CD8-positive, alpha-beta T cell (primary cell): ENCODE measurements at regions of chr20 and their contacts with region 1.

Region 1: DNA sequence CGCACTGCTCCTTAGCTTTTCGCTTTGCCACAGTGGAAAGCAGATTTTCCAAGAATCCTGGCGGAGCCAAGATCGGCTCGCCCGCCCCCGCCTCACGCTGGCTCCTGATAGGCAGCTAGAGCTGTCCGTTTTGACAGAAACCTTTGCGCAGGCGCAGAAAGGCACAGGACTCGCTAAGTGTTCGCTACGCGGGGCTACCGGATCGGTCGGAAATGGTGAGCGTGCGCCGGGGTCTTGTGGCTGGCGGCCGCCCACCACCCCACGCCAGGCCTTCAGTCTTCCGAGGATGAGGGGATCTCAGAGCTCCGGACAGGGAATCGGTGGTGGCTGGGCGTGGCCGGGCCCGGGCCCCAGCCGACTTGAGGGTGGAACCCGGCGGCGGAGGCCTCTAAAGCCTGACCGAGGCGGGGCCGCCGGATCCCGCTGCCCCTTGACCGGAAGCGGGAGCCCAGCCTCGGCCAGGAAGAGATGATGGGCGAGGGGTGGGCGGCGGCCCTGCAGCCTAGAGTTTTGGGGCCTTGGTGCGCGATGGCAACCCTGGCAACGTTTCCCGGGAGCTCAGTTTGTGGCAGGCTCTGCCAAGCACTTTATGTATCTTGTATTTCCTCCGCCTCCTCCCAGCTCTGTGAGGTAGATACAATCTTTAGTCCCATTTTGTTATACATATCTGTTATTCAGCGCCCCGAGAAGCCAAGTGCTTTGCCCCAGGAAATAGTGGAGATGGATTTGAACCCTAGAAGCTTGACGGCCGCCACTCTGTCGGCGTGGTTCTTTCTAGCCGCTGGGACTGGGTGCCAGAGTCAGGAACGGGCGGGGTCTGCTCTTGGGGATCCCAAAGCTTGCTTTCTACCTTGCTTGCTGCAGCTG is at the start of gene DYNLRB1:
- DNase-seq: peak; percentile 84 to 97 (median 96)
- ATAC-seq: peak; percentile 74
- H3K4me3 ChIP-seq: peak within 1 kb of the TSS; percentile 85 to 100
- H3K4me3 Mint-ChIP-seq: peak within 1 kb of the TSS; percentile 100
- H3K27ac ChIP-seq: peak within 1 kb of the TSS; percentile 77 to 85
- H3K27ac Mint-ChIP-seq: peak within 1 kb of the TSS; percentile 98
- H3K4me1 ChIP-seq: peaks cover 24% of the 10 kb centered on the region
- H3K4me1 Mint-ChIP-seq: peaks cover 60% of the 10 kb centered on the region
- H3K27me3 ChIP-seq: no peaks in the 10 kb centered on the region
- H3K27me3 Mint-ChIP-seq: no peaks in the 10 kb centered on the region
- CTCF ChIP-seq: no peak
- total RNA-seq, gene DYNLRB1: 34.9 to 38.0 TPM

Region 2: DNA sequence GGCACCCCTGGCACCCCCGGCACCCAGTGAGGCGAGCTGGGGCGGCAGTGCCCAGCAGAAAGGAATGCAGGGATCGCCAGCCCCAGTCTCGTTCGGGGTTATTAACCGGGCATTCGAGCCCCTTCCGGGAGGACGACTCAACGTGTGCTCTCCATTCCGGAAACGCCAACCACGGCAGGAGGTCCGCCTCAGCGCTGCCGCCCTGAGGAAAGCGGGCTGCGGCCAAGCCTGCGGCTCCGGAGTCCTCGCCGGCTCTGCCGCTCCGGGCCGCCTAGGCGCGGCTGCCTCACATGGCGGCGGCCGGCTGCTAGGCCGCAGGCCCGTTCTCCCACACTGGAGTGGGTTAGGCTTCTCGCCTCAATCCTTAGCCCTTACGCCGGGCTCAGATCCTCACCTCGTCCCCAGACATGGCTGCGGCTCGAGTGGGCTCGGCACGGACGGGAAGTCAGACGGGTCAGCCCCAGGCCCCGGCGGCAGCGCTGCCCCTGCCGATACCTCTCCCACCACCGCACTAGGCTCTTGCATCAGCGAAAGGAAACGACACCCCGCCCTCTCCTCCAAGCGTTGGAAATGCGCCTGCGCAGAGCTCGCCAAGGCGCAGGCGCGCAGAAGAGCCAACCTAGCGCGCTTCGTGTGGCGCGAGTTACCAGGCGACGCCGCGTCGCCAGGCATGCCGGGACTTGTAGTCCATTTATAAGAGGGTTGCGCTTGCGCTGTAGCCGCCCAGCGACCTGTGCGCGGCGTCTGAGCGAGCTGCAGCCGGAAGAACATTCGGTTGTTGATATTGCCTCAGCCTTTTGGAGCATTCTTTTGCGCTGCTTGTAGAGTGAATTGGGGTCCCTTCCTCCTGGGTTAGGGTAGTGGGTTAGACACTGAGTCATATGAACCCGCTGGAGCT is 404.5 kb before region 1 on chr20 and contains the start of gene EIF2S2:
- CTCF ChIA-PET with region 1: no interaction called
- POLR2A ChIA-PET with region 1: interaction called, 5 read pairs
- intact Hi-C with region 1: loop called in 1 of 2 experiments (anchors 5 kb)
- DNase-seq: peak; percentile 91 to 99 (median 95)
- ATAC-seq: peak; percentile 89
- H3K4me3 ChIP-seq: peak within 1 kb of the TSS; percentile 81 to 86
- H3K4me3 Mint-ChIP-seq: peak within 1 kb of the TSS; percentile 96
- H3K27ac ChIP-seq: peak within 1 kb of the TSS; percentile 89 to 93
- H3K27ac Mint-ChIP-seq: peak within 1 kb of the TSS; percentile 98
- H3K4me1 ChIP-seq: peaks cover 34% of the 10 kb centered on the region
- H3K4me1 Mint-ChIP-seq: peaks cover 42% of the 10 kb centered on the region
- H3K27me3 ChIP-seq: no peaks in the 10 kb centered on the region
- H3K27me3 Mint-ChIP-seq: no peaks in the 10 kb centered on the region
- CTCF ChIP-seq: no peak
- total RNA-seq, gene EIF2S2: 19.4 to 19.6 TPM

Region 3: DNA sequence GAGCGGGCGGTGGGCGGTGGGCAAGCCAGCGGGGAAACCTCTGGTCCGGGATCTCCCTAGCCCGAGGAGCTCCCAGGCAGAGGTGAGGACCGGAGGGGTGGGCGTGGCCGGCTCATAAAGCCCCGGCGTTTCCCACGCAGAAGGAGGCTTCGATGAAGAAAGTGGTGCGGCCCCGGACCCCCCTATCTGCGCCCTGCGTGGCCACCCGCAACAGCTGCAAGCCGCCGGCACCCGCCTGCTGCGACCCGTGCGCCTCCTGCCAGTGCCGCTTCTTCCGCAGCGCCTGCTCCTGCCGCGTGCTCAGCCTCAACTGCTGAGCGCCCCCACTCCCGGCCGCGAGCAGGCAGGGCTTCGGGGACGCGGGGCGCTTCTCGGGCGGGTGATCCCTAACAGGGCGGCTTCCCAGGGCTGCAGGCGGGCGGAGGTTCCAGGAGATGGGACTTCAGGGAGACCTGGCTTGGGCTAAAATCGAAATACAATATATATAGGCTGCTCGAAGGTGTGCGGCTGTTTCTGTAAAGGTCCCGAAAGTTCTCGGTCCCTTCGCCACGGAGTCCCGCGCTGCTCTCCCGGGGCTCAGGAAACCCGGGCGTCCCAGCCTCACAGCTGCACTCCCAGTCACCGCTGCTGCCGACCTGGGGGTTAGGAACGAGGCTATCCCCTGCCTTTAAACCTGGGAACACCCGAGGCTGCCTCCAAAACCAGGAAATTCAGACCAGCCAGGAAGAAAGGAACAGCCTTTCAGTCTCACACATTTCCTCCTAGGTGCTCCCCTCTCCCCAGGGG is 247.4 kb before region 1 on chr20:
- CTCF ChIA-PET with region 1: no interaction called
- POLR2A ChIA-PET with region 1: no interaction called
- intact Hi-C with region 1: no loop called
- DNase-seq: peak in 8 of 9 experiments; percentile 7 to 61 (median 32)
- ATAC-seq: peak; percentile 61
- H3K4me3 ChIP-seq: peak overlapping the region; percentile 14 to 18
- H3K4me3 Mint-ChIP-seq: peak overlapping the region; percentile 49
- H3K27ac ChIP-seq: no peak overlapping the region
- H3K27ac Mint-ChIP-seq: no peak overlapping the region
- H3K4me1 ChIP-seq: peaks cover 4% of the 10 kb centered on the region
- H3K4me1 Mint-ChIP-seq: peaks cover 2% of the 10 kb centered on the region
- H3K27me3 ChIP-seq: no peaks in the 10 kb centered on the region
- H3K27me3 Mint-ChIP-seq: peaks cover 14% of the 10 kb centered on the region
- CTCF ChIP-seq: no peak

Region 4: GRCh38 chr20:34312544-34313217 is 203.8 kb before region 1 on chr20:
- CTCF ChIA-PET with region 1: interaction called, 37 read pairs
- POLR2A ChIA-PET with region 1: interaction called, 5 read pairs
- intact Hi-C with region 1: no loop called
- DNase-seq: peak; percentile 74 to 92 (median 86)
- ATAC-seq: peak; percentile 100
- H3K4me3 ChIP-seq: no peak overlapping the region
- H3K4me3 Mint-ChIP-seq: peak overlapping the region; percentile 39
- H3K27ac ChIP-seq: no peak overlapping the region
- H3K27ac Mint-ChIP-seq: no peak overlapping the region
- H3K4me1 ChIP-seq: peaks cover 9% of the 10 kb centered on the region
- H3K4me1 Mint-ChIP-seq: peaks cover 5% of the 10 kb centered on the region
- H3K27me3 ChIP-seq: peaks cover 9 to 11% of the 10 kb centered on the region in 2 experiments
- H3K27me3 Mint-ChIP-seq: peaks cover 20% of the 10 kb centered on the region
- CTCF ChIP-seq: peak; percentile 99

Region 5: DNA sequence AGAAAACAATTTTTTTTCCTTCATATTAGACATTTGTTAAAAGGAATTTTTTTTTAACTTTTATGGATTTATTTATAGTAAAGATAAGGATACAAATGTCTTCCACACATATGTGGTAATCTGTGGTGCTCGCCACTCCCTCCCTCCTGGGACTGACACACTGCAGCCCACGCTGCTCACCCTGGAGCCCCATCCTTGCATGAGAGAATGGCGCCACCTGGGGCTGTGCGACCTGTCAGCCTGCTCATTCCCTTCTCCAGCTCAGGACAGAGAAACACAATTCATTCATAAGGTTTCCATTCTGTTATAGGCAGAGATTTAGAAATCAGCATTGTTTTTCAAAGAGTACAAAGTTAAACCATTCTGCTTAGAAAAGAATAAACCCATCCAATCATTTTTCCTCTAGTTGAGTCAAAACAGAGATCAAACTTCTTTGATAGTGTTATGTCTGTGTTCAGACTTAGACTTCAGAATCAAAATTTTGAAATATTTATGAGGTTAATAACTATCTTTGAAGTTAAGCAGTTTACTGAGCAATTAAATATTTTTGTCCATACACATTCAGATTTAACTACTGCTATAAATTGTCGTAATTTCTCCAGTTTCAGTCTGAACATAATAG is 43.1 kb before region 1 on chr20:
- CTCF ChIA-PET with region 1: no interaction called
- POLR2A ChIA-PET with region 1: no interaction called
- intact Hi-C with region 1: loop called in 1 of 2 experiments (anchors 5 kb)
- DNase-seq: peak in 5 of 9 experiments; percentile 20 to 51 (median 37)
- ATAC-seq: peak; percentile 57
- H3K4me3 ChIP-seq: no peak overlapping the region
- H3K4me3 Mint-ChIP-seq: no peak overlapping the region
- H3K27ac ChIP-seq: no peak overlapping the region
- H3K27ac Mint-ChIP-seq: no peak overlapping the region
- H3K4me1 ChIP-seq: no peaks in the 10 kb centered on the region
- H3K4me1 Mint-ChIP-seq: peaks cover 8% of the 10 kb centered on the region
- H3K27me3 ChIP-seq: no peaks in the 10 kb centered on the region
- H3K27me3 Mint-ChIP-seq: no peaks in the 10 kb centered on the region
- CTCF ChIP-seq: no peak

Region 6: DNA sequence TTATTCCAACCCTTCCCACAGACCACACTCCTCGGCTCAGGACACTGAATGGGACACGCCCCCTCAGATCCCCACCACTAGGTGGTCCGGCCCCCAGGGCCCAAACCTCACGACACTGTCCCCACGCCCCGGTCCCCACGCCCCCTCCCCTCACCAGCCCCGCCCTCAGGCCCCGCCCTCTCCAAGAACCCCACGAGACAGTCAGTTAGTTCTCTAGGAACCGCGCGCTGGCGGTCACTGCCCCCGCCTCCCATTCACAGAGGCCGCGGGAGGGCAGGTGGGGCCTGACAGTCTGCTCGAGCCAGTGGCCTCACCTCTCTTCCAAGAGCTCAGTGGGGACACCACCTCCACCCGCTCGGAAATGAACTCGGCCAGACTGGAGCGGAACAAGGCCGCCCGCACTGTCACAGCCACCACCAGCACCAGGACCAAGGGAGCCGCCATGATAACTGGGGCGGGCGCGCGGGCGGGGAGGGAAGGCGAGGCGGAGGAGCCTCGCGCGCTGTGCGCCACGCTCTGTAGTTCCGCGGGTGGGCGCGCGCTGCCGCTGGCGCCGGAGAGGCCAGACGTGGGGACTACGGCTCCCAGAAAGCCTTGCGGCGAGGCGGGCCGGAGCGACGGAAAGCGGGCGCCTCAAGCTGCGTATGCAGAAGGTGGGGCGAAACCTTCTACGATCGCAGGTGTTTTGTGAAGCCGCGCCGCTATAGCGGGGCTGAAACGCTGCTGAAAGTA is 160.3 kb after region 1 on chr20 and contains the start of gene PIGU:
- CTCF ChIA-PET with region 1: no interaction called
- POLR2A ChIA-PET with region 1: no interaction called
- intact Hi-C with region 1: loop called (anchors 2 kb)
- DNase-seq: peak; percentile 92 to 98 (median 96)
- ATAC-seq: peak; percentile 96
- H3K4me3 ChIP-seq: peak within 1 kb of the TSS; percentile 80 to 94
- H3K4me3 Mint-ChIP-seq: peak within 1 kb of the TSS; percentile 97
- H3K27ac ChIP-seq: peak within 1 kb of the TSS; percentile 83 to 90
- H3K27ac Mint-ChIP-seq: peak within 1 kb of the TSS; percentile 96
- H3K4me1 ChIP-seq: peaks cover 16% of the 10 kb centered on the region
- H3K4me1 Mint-ChIP-seq: peaks cover 22% of the 10 kb centered on the region
- H3K27me3 ChIP-seq: no peaks in the 10 kb centered on the region
- H3K27me3 Mint-ChIP-seq: no peaks in the 10 kb centered on the region
- CTCF ChIP-seq: no peak
- total RNA-seq, gene PIGU: 3.3 to 5.2 TPM

Region 7: DNA sequence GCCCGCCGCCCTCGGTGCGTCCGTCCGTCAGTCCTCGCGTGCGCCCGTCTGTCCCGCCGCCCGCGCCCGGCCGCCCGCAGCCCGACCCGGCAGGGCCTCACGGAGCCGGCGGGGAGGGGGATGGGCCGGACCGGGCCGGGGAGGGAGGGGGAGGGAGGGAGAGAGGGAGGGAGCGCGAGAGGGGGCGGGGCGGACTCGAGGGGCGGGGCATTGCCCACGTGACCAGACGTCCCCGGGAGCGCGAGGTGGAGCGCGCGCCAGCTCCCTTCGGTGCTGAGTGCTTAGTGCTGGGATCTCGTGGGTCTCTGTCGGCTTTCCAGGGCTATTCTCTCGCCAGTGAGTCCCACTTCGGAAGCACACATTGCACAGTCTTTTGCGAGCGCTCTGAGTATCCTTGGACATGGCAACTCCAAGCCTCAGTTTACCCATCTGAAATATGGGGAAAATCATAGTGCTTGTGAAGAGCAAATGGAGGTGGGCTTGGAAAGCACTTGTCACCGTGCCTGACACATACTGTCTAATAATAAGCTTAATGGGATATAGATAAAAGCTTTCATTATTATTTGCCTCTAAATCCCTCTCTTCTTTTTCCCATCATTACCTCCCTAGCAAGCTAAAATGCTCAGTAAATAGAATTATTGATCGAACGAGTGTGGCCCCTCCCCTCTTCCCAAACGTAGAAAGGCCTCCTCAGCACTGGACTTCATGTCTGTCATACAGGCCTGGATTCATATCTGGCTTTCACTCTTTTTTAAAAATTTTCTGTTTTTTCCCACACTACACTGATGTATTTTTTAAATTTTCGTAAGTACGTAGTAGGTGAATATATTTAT is 309.3 kb after region 1 on chr20 and contains the start of gene NCOA6:
- CTCF ChIA-PET with region 1: no interaction called
- POLR2A ChIA-PET with region 1: no interaction called
- intact Hi-C with region 1: loop called in 1 of 2 experiments (anchors 2 kb)
- DNase-seq: peak; percentile 76 to 92 (median 85)
- ATAC-seq: peak; percentile 71
- H3K4me3 ChIP-seq: peak within 1 kb of the TSS; percentile 87 to 89
- H3K4me3 Mint-ChIP-seq: peak within 1 kb of the TSS; percentile 98
- H3K27ac ChIP-seq: peak within 1 kb of the TSS; percentile 38 to 67
- H3K27ac Mint-ChIP-seq: peak within 1 kb of the TSS; percentile 97
- H3K4me1 ChIP-seq: peaks cover 21% of the 10 kb centered on the region
- H3K4me1 Mint-ChIP-seq: peaks cover 41% of the 10 kb centered on the region
- H3K27me3 ChIP-seq: no peaks in the 10 kb centered on the region
- H3K27me3 Mint-ChIP-seq: peaks cover 2% of the 10 kb centered on the region
- CTCF ChIP-seq: no peak
- total RNA-seq, gene NCOA6: 13.0 to 13.5 TPM

Region 8: DNA sequence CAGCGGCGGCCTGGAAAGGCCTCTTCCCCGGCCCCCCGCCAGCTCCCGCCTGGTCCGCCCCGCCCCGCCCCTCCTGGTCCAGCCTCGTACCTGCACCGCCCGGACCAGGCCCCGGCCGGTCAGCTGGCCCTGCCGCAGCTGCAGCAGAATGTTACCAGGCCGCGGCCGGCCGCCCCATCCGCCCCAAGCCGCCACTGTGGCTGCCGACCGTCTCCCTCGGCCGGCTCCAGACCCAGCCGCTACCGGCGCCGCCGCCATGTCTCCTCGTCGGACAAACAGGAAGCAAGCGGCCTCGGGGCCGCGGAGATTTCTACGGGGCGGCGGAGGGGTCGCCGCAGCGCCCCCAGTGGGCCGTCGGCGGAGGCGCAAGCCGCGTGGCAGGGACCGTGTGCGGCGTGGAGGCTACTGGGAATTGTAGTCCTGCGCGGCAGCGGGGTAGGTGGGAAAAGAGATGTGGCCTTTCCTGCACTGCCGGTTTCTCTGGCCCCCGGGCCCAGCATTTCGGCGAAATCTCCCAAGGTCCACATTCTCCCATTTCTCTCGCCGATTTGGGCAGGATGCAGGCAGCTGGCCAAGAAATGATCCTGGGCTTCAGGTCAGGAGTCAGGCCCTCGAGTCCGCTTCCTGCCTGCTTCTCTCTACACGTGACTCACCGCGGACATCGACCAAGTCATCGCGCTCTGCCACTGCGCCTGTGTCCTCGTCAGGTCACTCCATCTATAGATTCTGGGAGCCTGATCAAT is 576.2 kb after region 1 on chr20 and contains the start of gene TRPC4AP:
- CTCF ChIA-PET with region 1: no interaction called
- POLR2A ChIA-PET with region 1: no interaction called
- intact Hi-C with region 1: loop called in 1 of 2 experiments (anchors 2 kb)
- DNase-seq: peak; percentile 77 to 95 (median 87)
- ATAC-seq: peak; percentile 97
- H3K4me3 ChIP-seq: peak within 1 kb of the TSS; percentile 84 to 91
- H3K4me3 Mint-ChIP-seq: peak within 1 kb of the TSS; percentile 89
- H3K27ac ChIP-seq: peak within 1 kb of the TSS; percentile 72 to 74
- H3K27ac Mint-ChIP-seq: peak within 1 kb of the TSS; percentile 91
- H3K4me1 ChIP-seq: peaks cover 42% of the 10 kb centered on the region
- H3K4me1 Mint-ChIP-seq: peaks cover 49% of the 10 kb centered on the region
- H3K27me3 ChIP-seq: no peaks in the 10 kb centered on the region
- H3K27me3 Mint-ChIP-seq: no peaks in the 10 kb centered on the region
- CTCF ChIP-seq: peak; percentile 88
- total RNA-seq, gene TRPC4AP: 63.3 to 64.0 TPM